ENCODE measurements at regions of chr20 and their contacts with region 1.

Region 1: GRCh38 chr20:9616833-9617489 is 102.6 kb downstream of the LAMP5 start:
- DNase-seq: no peak
- H3K4me3 ChIP-seq: no peak overlapping the region
- H3K27ac ChIP-seq: no peak overlapping the region
- H3K4me1 ChIP-seq: no peaks in the 10 kb centered on the region
- H3K27me3 ChIP-seq: no peaks in the 10 kb centered on the region
- CTCF ChIP-seq: peak; percentile 59 to 71 (median 70)
- POLR2A ChIP-seq: no peak

Region 2: GRCh38 chr20:9573335-9574121 is 43.4 kb before region 1 on chr20:
- intact Hi-C with region 1: no loop called
- DNase-seq: no peak
- H3K4me3 ChIP-seq: no peak overlapping the region
- H3K27ac ChIP-seq: no peak overlapping the region
- H3K4me1 ChIP-seq: no peaks in the 10 kb centered on the region
- H3K27me3 ChIP-seq: no peaks in the 10 kb centered on the region
- CTCF ChIP-seq: no peak
- POLR2A ChIP-seq: no peak

Region 3: DNA sequence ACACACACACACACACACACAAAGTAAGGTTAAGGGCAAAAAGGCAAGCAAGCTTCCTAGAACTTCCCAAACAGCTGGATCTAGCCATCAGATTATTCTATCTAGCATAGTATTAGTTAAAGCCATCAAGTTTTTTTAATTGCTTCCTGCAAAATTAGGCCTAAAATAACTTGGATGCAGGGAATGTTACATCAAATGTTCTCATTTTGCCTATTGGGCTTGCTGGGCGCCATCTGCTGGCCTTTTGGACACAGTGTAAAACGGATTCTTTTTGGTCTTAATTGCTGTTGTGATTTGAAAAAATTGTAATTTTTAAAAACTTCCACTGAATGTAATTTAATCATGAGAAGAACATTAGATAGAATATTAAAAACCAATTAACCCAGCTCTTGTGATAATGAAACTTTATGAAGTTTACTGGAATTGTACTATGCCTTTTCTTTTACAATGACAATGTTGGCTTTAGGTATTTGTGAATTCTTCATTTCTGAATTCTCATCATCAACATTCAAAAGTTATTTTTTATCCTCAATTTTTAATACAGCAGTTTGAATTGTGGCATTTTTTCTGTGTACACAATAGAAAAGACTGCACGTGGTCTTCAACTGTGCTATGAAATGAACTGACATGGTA is 810.2 kb after region 1 on chr20:
- intact Hi-C with region 1: loop called (anchors 5 kb)
- DNase-seq: no peak
- H3K4me3 ChIP-seq: no peak overlapping the region
- H3K27ac ChIP-seq: no peak overlapping the region
- H3K4me1 ChIP-seq: no peaks in the 10 kb centered on the region
- H3K27me3 ChIP-seq: no peaks in the 10 kb centered on the region
- CTCF ChIP-seq: peak; percentile 46 to 67 (median 59)
- POLR2A ChIP-seq: no peak

Region 4: DNA sequence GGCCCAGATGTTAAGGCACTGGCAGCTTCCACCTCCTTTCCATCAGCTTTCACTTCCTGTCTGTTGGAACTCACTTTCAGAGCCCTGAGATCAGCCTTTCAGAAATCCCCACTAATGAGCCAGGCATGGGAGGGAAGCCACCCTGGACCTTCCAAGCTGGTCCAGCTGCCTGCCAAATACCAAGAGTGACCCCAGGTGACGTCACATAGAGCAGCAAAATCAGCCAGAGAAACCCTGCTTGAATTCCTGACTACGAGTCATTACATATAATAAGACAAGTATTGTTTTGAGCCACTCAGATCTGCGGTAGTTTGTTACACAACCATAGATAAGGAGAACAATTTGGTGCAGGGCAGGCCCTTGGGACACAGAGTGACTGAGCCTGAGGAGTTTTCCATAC is 1612.8 kb after region 1 on chr20:
- intact Hi-C with region 1: no loop called
- DNase-seq: no peak
- H3K4me3 ChIP-seq: peak overlapping the region in 1 of 3 donors; percentile 9
- H3K27ac ChIP-seq: peak overlapping the region in 1 of 2 donors; percentile 49
- H3K4me1 ChIP-seq: no peaks in the 10 kb centered on the region
- H3K27me3 ChIP-seq: no peaks in the 10 kb centered on the region
- CTCF ChIP-seq: no peak
- POLR2A ChIP-seq: no peak